GM23248 (cell line): ENCODE measurements at regions of chr10 and their contacts with region 1.

Region 1: GRCh38 chr10:62268399-62269114 is at the start of gene RTKN2:
- DNase-seq: peak; percentile 83
- H3K4me3 ChIP-seq: peak within 1 kb of the TSS; percentile 93
- H3K27ac ChIP-seq: no peak within 1 kb of the TSS
- H3K4me1 ChIP-seq: peaks cover 3% of the 10 kb centered on the region; the same call in 1 of the 2 replicates
- H3K27me3 ChIP-seq: no peaks in the 10 kb centered on the region
- total RNA-seq, gene RTKN2: under 0.01 and 0.11 TPM in 2 replicates

Region 2: GRCh38 chr10:61404751-61405150 is 863.8 kb before region 1 on chr10:
- in situ Hi-C with region 1: no loop called
- DNase-seq: peak; percentile 75
- H3K4me3 ChIP-seq: no peak overlapping the region
- H3K27ac ChIP-seq: no peak overlapping the region
- H3K4me1 ChIP-seq: peaks cover 21% of the 10 kb centered on the region
- H3K27me3 ChIP-seq: no peaks in the 10 kb centered on the region

Region 3: DNA sequence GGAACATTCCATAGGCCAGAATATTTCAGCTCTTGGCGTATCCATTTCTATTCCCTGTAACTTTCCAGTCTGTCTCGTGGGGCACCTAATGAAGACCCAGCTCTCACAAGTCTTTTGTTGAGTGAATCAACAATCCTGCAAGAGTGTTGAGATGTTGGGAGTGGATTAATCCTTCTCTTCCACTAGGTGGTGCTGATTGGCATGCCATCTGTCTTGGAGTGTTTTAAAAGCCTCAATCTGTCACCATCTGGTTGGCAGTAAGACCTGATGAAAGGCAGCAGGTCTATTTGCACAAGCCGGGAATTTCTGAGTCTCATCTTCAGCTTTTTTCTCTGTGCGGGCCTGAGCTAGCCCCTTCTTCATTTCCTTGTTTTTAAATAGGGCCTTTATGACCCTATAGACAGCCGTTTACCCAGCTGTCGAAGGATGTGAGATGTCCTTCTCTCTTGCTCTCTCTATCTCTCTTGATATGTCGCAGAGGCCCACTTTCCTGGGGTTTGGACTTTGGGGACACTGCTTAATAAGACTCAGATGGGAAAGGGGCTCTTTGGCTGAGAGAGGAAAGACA is 286.2 kb after region 1 on chr10:
- in situ Hi-C with region 1: loop called (anchors 25 kb)
- DNase-seq: peak; percentile 70
- H3K4me3 ChIP-seq: no peak overlapping the region
- H3K27ac ChIP-seq: no peak overlapping the region
- H3K4me1 ChIP-seq: peaks cover 8% of the 10 kb centered on the region
- H3K27me3 ChIP-seq: no peaks in the 10 kb centered on the region

Region 4: DNA sequence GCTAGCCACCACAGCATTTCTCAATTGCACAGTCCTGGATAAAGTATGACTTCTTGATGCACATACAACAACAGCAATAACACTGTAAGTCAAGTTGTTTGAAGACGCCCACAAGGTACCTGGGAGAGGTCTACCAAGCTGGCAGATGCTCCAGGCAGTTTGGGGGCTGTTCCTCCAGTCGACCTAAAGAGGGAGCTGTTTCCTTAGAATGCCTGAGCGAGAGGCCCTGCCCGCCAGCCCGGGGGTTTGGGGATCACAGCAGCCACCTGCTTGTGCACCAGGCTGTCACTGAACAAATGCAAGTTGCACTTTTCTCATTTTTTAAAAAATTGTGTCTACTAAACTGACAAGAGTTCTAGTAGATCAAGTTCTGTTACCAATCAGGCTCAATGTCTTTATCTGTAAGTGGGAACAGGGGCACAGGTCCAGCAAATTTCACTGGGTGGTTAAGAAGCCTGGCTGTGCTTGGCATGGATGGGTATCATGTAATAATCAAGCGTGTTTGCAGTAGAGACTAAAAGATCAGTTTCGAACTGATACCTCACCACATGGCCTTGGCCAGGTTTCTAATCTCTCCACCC is 342.2 kb after region 1 on chr10:
- in situ Hi-C with region 1: no loop called
- DNase-seq: peak; percentile 68
- H3K4me3 ChIP-seq: no peak overlapping the region
- H3K27ac ChIP-seq: no peak overlapping the region
- H3K4me1 ChIP-seq: peaks cover 13% of the 10 kb centered on the region
- H3K27me3 ChIP-seq: no peaks in the 10 kb centered on the region

Region 5: DNA sequence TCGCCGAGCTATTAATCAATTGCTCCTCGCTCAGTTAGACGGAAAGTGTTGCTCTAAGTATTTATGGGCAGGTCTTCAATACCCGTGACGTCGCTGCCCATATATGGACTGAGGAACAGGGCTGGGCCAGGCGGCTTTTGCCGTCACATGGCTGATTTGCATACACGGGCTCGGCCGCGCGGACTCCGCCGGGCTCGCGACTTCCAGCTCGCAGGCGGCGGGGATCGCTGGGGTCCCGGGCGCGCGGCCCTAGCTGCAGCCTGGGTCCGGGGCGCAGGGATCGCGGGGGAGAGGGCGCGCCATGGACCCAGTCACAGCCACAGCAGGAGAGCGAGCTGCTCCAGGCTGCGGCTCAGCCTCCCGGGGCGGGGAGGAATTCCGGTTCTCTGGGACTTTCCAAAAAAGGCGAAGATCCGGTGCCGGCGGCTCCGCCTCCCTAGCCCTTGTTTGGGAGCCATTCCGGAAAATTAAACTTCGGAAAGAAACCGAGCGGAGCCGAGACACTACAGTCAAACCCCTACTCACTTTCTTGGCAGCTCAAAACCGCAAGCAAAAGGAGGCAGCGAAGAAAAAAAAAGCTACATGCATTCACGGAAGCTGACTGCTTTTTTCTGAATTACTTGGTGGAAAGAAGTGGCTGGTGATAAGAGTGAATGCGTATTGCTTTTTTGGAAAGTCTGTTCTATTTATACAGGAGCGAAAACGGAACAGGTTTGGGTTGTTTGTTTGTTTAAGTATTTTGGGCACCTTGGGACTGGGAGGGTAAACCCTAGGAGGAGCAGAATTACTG is 548.0 kb after region 1 on chr10 and contains the start of gene EGR2:
- in situ Hi-C with region 1: loop called (anchors 25 kb)
- DNase-seq: peak; percentile 99
- H3K4me3 ChIP-seq: peak within 1 kb of the TSS; percentile 88
- H3K27ac ChIP-seq: peak within 1 kb of the TSS; percentile 43
- H3K4me1 ChIP-seq: peaks cover 10% of the 10 kb centered on the region; the same call in 1 of the 2 replicates
- H3K27me3 ChIP-seq: 0 out of 2 replicates have a peak, but pooled peaks cover 4% of the 10 kb centered on the region
- total RNA-seq, gene EGR2: 0.76 and 1.1 TPM in 2 replicates

Region 6: GRCh38 chr10:63133056-63133820 is 864.7 kb after region 1 on chr10 and contains the start of gene NRBF2:
- in situ Hi-C with region 1: loop called (anchors 25 kb)
- DNase-seq: peak; percentile 99
- H3K4me3 ChIP-seq: peak within 1 kb of the TSS; percentile 91
- H3K27ac ChIP-seq: peak within 1 kb of the TSS; percentile 96
- H3K4me1 ChIP-seq: peaks cover 30% of the 10 kb centered on the region
- H3K27me3 ChIP-seq: no peaks in the 10 kb centered on the region
- total RNA-seq, gene NRBF2: 31.7 and 31.8 TPM in 2 replicates